Heart right ventricle (tissue), 16 donors: ENCODE measurements at regions of chr9 and their contacts with region 1.

Region 1: GRCh38 chr9:69818750-69819345 is 1.8 kb upstream of the CFAP95 start:
- DNase-seq: no peak
- ATAC-seq: no peak
- H3K4me3 ChIP-seq: no peak overlapping the region
- H3K27ac ChIP-seq: no peak overlapping the region
- H3K4me1 ChIP-seq: peaks cover 0 to 7% (median 0%) of the 10 kb centered on the region in 9 donors
- H3K27me3 ChIP-seq: peaks cover 0 to 47% (median 23%) of the 10 kb centered on the region in 7 donors
- CTCF ChIP-seq: no peak

Region 2: GRCh38 chr9:69745716-69746437 is 73.0 kb before region 1 on chr9:
- intact Hi-C with region 1: loop called in 1 of 10 experiments (anchors 5 kb)
- DNase-seq: no peak
- ATAC-seq: peak in 3 of 8 donors; percentile 17 to 44 (median 27)
- H3K4me3 ChIP-seq: no peak overlapping the region
- H3K27ac ChIP-seq: peak overlapping the region in 1 of 10 donors; percentile 67
- H3K4me1 ChIP-seq: peaks cover 0 to 32% (median 22%) of the 10 kb centered on the region in 9 donors
- H3K27me3 ChIP-seq: no peaks in the 10 kb centered on the region
- CTCF ChIP-seq: peak in 6 of 9 donors; percentile 14 to 33 (median 26)